Activated T-helper 2 cell treated with anti-CD3 and anti-CD28 coated beads, Interferon-gamma antibody, Interleukin-2, Interleukin-4, amounts not matched to agents 10 μg/mL and 5 μg/mL and 100 μg/mL, durations not matched to agents 14 hours and 24 hours and 36 hours (primary cell): ENCODE measurements at regions of chr7 and their contacts with region 1.

Region 1: DNA sequence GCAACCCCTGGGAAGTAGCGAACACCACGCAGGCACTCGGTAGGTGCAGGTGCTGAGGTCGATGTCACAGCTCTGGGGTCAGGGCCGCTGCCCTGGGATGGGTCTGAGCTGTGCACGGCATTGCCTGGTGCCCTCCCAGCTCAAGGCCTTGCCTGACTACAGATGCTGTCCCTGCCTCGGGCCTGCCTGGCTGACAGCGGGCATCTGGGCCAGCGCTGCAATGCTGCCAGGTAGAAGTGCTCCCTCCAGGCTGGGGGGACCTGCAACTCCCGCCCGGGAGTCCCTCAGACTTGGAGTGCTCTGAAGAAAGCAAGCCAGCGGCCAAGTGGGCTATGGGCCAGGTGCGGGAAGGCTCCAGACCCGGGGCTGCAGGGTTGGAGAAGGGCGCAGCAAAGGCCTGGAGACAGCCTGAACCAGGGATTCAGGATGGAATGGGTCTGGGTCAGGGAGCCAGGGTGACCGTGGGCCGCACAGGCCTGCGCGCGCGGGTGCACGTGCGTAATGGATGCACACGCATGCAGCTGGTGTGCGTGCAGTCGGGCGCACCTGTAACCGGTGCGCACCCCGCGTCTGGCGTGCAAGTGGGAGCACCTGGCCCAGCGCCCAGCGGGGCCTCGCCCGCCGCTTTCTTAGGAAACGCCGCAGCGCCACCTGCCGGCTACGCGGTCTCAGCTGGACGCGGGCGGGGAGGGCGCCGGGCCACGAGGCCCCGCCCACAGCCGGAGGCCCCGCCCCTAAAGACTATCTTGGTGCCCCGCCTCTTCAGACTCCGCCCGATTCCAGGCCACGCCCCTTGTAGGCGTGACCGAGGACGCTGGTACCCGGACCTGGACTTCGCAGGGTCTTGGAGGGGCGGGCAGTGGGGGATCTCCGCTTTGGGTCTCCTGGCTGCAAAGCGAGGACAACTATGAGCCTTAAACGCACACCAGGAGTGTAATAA is 46.7 kb downstream of the MICALL2 start:
- DNase-seq: peak; percentile 78
- H3K4me3 Mint-ChIP-seq: peak overlapping the region; percentile 8
- H3K27ac Mint-ChIP-seq: no peak overlapping the region
- H3K4me1 Mint-ChIP-seq: peaks cover 15% of the 10 kb centered on the region
- H3K27me3 Mint-ChIP-seq: peaks cover 2% of the 10 kb centered on the region

Region 2: GRCh38 chr7:1123715-1124114 is 288.9 kb before region 1 on chr7:
- intact Hi-C with region 1: no loop called
- DNase-seq: no peak
- H3K4me3 Mint-ChIP-seq: no peak overlapping the region
- H3K27ac Mint-ChIP-seq: no peak overlapping the region
- H3K4me1 Mint-ChIP-seq: peaks cover 3% of the 10 kb centered on the region
- H3K27me3 Mint-ChIP-seq: no peaks in the 10 kb centered on the region

Region 3: DNA sequence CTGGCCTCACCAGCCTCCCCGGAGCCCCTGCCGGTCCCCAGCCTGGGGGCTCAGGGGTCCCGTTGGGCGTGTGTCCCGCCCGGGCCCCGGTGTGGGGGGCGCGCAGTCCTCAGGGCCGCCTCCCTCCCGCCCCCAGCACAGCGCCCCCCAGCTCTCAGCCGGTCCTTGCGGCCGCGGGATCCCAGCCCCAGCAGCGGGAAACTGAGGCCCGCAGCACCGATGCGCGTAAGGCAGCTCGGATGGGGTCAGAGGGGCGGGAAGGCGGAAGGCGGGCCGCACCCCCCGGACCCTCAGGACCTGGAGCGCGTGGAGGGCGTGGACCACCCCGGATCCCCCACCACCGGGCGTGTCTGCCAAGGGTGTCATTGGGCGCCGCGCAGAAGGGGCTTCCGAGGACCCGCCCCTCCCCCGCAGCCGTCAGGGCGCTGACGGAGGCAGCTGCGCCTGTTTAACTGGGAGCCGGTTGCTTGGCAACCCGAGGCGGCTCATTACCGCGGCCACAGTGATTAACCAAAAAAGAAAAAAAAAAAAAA is 165.0 kb before region 1 on chr7:
- intact Hi-C with region 1: loop called (anchors 10 kb)
- DNase-seq: no peak
- H3K4me3 Mint-ChIP-seq: no peak overlapping the region
- H3K27ac Mint-ChIP-seq: no peak overlapping the region
- H3K4me1 Mint-ChIP-seq: no peaks in the 10 kb centered on the region
- H3K27me3 Mint-ChIP-seq: peaks cover 56% of the 10 kb centered on the region

Region 4: DNA sequence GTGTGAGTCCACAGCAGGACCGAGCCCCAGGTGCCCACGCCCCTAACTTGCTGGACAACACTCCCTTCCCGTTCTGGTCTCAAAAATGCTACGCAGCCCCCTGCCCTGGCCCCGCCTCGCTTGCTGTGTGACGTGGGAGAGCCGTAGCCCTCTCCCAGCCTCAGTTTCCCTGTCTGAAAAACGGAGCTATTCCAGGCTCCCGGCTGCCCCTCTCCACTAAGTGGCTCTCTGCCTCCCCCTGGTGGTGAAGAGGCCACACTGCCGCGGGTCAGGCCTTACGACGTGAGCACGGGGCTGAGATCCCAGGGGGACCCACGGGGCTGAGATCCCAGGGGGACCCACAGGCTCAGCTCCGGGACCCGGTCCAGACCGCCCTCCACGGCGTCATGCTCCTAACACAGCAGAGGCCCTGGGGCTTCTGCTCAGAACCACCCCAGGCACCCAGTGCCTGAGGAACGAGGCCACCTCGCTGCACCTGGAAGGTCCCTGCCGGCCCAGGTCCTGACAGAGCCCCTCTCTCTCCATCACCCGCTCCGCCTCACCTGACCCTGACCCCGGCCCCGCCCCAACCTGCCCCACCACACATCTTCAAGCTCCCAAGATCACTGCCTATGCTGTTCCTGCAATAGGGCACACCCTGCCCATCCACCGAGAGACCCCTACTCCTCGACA is 20.0 kb after region 1 on chr7:
- intact Hi-C with region 1: loop called (anchors 1 kb)
- DNase-seq: peak; percentile 51
- H3K4me3 Mint-ChIP-seq: no peak overlapping the region
- H3K27ac Mint-ChIP-seq: no peak overlapping the region
- H3K4me1 Mint-ChIP-seq: peaks cover 2% of the 10 kb centered on the region
- H3K27me3 Mint-ChIP-seq: peaks cover 2% of the 10 kb centered on the region

Region 5: GRCh38 chr7:1459522-1459892 is 46.9 kb after region 1 on chr7:
- intact Hi-C with region 1: loop called (anchors 2 kb)
- DNase-seq: peak; percentile 95
- H3K4me3 Mint-ChIP-seq: no peak overlapping the region
- H3K27ac Mint-ChIP-seq: no peak overlapping the region
- H3K4me1 Mint-ChIP-seq: no peaks in the 10 kb centered on the region
- H3K27me3 Mint-ChIP-seq: peaks cover 6% of the 10 kb centered on the region